Activated CD4-positive, alpha-beta memory T cell treated with anti-CD3 and anti-CD28 coated beads for 36 hours (primary cell): ENCODE measurements at regions of chr1 and their contacts with region 1.

Region 1: GRCh38 chr1:6121021-6121421 is 59.1 kb downstream of the CHD5 start:
- DNase-seq: no peak
- H3K4me3 Mint-ChIP-seq: no peak overlapping the region
- H3K27ac Mint-ChIP-seq: no peak overlapping the region
- H3K4me1 Mint-ChIP-seq: no peaks in the 10 kb centered on the region
- H3K27me3 Mint-ChIP-seq: peaks cover 2% of the 10 kb centered on the region

Region 2: GRCh38 chr1:6148497-6149241 is 27.6 kb after region 1 on chr1:
- CTCF ChIA-PET with region 1: no interaction called
- POLR2A ChIA-PET with region 1: no interaction called
- intact Hi-C with region 1: loop called (anchors 1 kb)
- DNase-seq: peak; percentile 81
- H3K4me3 Mint-ChIP-seq: peak overlapping the region; percentile 43
- H3K27ac Mint-ChIP-seq: no peak overlapping the region
- H3K4me1 Mint-ChIP-seq: peaks cover 3% of the 10 kb centered on the region
- H3K27me3 Mint-ChIP-seq: peaks cover 7% of the 10 kb centered on the region